Psoas muscle (tissue), 8 donors: ENCODE measurements at regions of chr15 and their contacts with region 1.

Region 1: GRCh38 chr15:66251790-66252684 is 1.5 kb downstream of the MEGF11 start:
- DNase-seq: peak; percentile 50 to 72
- ATAC-seq: peak; percentile 79 to 95 (median 88)
- H3K4me3 ChIP-seq: peak overlapping the region; percentile 67
- H3K27ac ChIP-seq: no peak overlapping the region
- H3K4me1 ChIP-seq: peaks cover 12% of the 10 kb centered on the region
- H3K27me3 ChIP-seq: peaks cover 4 to 76% (median 20%) of the 10 kb centered on the region in 3 donors
- CTCF ChIP-seq: peak; percentile 62

Region 2: GRCh38 chr15:66287461-66288057 is 35.5 kb after region 1 on chr15:
- intact Hi-C with region 1: loop called in 1 of 2 experiments (anchors 5 kb)
- DNase-seq: no peak
- ATAC-seq: peak in 1 of 4 donors; percentile 52
- H3K4me3 ChIP-seq: no peak overlapping the region
- H3K27ac ChIP-seq: no peak overlapping the region
- H3K4me1 ChIP-seq: peaks cover 9% of the 10 kb centered on the region
- H3K27me3 ChIP-seq: no peaks in the 10 kb centered on the region
- CTCF ChIP-seq: peak; percentile 61